CD4-positive, alpha-beta T cell (primary cell): ENCODE measurements at regions of chr2 and their contacts with region 1.

Region 1: DNA sequence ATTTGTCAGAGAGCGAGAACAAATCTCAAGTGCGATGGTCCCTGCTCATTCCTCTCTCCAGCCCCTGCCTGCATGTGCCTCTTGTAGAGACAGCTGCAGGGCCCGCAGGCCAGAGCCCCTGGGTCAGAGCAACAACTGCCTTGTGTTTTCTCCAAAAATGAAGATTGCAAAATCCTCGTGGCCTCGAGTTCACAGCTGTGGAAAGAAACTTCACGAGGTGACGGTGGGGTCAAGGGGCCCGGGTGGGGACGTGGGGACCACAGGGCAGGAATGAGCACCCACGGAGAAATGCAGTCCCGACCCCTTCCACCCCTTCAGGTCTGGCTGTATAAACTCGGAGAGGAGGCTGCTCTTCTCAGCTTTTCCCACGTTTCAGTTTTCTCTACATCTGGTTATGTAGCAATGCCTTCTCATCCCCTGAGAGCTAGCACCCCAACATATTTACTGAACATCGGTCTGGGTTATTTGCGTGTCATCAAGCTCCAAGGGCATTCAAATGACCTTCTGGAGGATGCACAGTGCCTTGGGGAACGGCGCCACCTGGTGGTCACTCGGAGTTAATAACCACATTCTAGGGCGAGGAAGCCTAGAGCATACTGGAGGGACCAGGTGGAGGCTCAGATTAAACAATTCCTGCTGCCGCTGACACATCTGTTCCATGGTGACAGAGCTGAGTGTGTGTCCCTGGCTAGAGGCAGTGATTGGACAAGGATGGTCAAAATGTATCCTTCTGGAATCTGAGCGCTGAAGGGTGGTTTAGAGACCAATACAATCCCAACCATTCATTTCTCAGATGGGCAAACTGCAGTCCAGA is 91.4 kb upstream of the CYRIA start:
- DNase-seq: peak; percentile 18 to 76 (median 44)
- ATAC-seq: peak; percentile 67
- H3K4me3 ChIP-seq: no peak overlapping the region
- H3K4me3 Mint-ChIP-seq: no peak overlapping the region
- H3K27ac ChIP-seq: no peak overlapping the region
- H3K27ac Mint-ChIP-seq: no peak overlapping the region
- H3K4me1 ChIP-seq: no peaks in the 10 kb centered on the region
- H3K4me1 Mint-ChIP-seq: no peaks in the 10 kb centered on the region
- H3K27me3 ChIP-seq: no peaks in the 10 kb centered on the region
- H3K27me3 Mint-ChIP-seq: peaks cover 5% of the 10 kb centered on the region
- CTCF ChIP-seq: peak; percentile 75

Region 2: GRCh38 chr2:15636972-15637785 is 1119.9 kb before region 1 on chr2:
- CTCF ChIA-PET with region 1: interaction called, 5 read pairs
- POLR2A ChIA-PET with region 1: no interaction called
- intact Hi-C with region 1: loop called in 1 of 2 experiments (anchors 1 kb)
- DNase-seq: peak; percentile 27 to 74 (median 47)
- ATAC-seq: peak; percentile 80
- H3K4me3 ChIP-seq: no peak overlapping the region
- H3K4me3 Mint-ChIP-seq: no peak overlapping the region
- H3K27ac ChIP-seq: no peak overlapping the region
- H3K27ac Mint-ChIP-seq: peak overlapping the region; percentile 49
- H3K4me1 ChIP-seq: no peaks in the 10 kb centered on the region
- H3K4me1 Mint-ChIP-seq: peaks cover 7% of the 10 kb centered on the region
- H3K27me3 ChIP-seq: no peaks in the 10 kb centered on the region
- H3K27me3 Mint-ChIP-seq: no peaks in the 10 kb centered on the region
- CTCF ChIP-seq: peak; percentile 94

Region 3: DNA sequence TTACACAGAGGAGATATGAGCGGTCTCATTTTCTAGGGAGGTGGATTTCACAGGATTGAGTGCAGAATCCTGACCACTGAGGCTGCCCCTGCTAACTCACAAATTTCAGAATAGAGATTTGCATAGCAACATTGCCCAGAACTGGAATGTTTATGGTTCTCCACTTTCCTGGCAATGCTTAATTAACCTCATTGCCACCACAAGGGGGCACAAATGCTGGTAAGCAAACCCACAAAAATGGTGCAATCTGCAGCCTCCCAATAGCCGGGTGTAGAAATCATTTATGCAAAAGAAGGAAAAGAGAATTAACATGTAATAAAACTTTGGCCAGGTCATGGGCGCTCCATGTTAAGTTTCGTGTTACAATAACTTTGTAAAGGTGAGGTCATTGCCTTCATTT is 203.8 kb before region 1 on chr2:
- CTCF ChIA-PET with region 1: no interaction called
- POLR2A ChIA-PET with region 1: no interaction called
- intact Hi-C with region 1: loop called in 1 of 2 experiments (anchors 2 kb)
- DNase-seq: peak in 5 of 14 experiments; percentile 2 to 49 (median 25)
- ATAC-seq: no peak
- H3K4me3 ChIP-seq: no peak overlapping the region
- H3K4me3 Mint-ChIP-seq: no peak overlapping the region
- H3K27ac ChIP-seq: no peak overlapping the region
- H3K27ac Mint-ChIP-seq: no peak overlapping the region
- H3K4me1 ChIP-seq: no peaks in the 10 kb centered on the region
- H3K4me1 Mint-ChIP-seq: no peaks in the 10 kb centered on the region
- H3K27me3 ChIP-seq: no peaks in the 10 kb centered on the region
- H3K27me3 Mint-ChIP-seq: peaks cover 5% of the 10 kb centered on the region
- CTCF ChIP-seq: peak; percentile 40

Region 4: GRCh38 chr2:17245906-17246305 is 488.9 kb after region 1 on chr2:
- CTCF ChIA-PET with region 1: no interaction called
- POLR2A ChIA-PET with region 1: no interaction called
- intact Hi-C with region 1: no loop called
- DNase-seq: no peak
- ATAC-seq: no peak
- H3K4me3 ChIP-seq: no peak overlapping the region
- H3K4me3 Mint-ChIP-seq: no peak overlapping the region
- H3K27ac ChIP-seq: no peak overlapping the region
- H3K27ac Mint-ChIP-seq: no peak overlapping the region
- H3K4me1 ChIP-seq: no peaks in the 10 kb centered on the region
- H3K4me1 Mint-ChIP-seq: no peaks in the 10 kb centered on the region
- H3K27me3 ChIP-seq: no peaks in the 10 kb centered on the region
- H3K27me3 Mint-ChIP-seq: no peaks in the 10 kb centered on the region
- CTCF ChIP-seq: no peak